Panc1 (cell line): ENCODE measurements at regions of chr3 and their contacts with region 1.

Region 1: DNA sequence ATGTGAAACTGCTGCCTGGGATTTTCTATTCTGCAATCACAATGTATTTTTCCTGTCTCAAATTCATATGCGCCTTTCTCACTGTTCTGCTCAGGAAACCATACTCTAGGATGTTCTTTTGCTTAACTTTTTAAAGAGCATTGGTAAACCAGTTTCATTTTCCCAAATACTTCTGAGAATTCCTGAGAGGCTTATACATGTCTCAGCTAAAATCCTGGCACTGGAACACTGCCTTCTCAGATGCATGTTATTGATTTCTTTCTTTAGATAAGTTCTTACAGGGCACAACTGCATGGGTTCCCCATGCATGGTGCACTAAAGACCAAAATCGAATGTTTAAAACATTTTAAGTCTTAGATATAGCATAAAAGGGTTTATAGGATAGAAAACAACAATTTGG is 178.3 kb upstream of the PLSCR5 start:
- DNase-seq: no peak
- ATAC-seq: no peak
- H3K4me3 ChIP-seq: no peak overlapping the region
- H3K27ac ChIP-seq: no peak overlapping the region
- H3K4me1 ChIP-seq: no peaks in the 10 kb centered on the region
- H3K27me3 ChIP-seq: no peaks in the 10 kb centered on the region
- CTCF ChIP-seq: no peak

Region 2: DNA sequence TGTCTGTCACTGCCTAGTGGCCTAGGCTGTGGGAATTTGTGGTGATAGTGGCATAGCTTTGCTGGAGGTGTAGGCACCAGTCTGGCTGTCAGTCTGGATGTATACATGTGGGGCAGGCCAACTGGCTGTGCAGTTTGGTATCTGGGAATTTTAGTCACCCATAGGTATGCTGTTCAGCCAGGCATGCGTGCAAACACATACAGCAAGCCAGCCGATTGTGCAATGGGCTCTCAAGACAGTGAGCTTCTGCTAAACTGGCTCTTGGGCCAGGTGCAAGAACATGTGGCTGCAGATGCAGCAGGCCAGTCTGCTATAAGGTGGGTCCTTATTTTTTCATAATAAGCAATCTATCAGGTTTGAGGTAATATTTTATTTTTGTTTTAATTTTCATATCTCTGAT is 91.2 kb before region 1 on chr3:
- CTCF ChIA-PET with region 1: no interaction called
- POLR2A ChIA-PET with region 1: no interaction called
- in situ Hi-C with region 1: no loop called
- intact Hi-C with region 1: no loop called
- DNase-seq: no peak
- ATAC-seq: no peak
- H3K4me3 ChIP-seq: no peak overlapping the region
- H3K27ac ChIP-seq: no peak overlapping the region
- H3K4me1 ChIP-seq: no peaks in the 10 kb centered on the region
- H3K27me3 ChIP-seq: no peaks in the 10 kb centered on the region
- CTCF ChIP-seq: no peak

Region 3: DNA sequence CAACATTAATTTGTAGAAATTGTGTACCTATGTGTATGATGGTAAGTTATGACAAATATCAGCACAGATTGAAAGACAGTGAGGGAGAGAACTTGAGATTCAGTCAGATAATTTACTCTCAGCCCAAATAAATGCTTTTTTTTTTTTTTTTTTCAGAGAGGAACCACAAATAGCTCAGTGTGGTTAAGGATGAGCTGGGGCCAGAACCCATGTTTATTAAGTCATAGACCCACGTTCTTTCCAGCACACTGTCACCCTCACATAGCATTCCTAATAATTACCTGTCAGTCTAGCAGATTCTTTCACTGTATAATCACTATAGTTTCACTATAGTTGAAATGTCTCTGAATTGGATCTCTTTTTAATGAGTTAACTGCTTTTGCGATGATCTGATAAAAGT is 871.8 kb after region 1 on chr3:
- CTCF ChIA-PET with region 1: no interaction called
- POLR2A ChIA-PET with region 1: interaction called, 11 read pairs
- in situ Hi-C with region 1: no loop called
- intact Hi-C with region 1: no loop called
- DNase-seq: no peak
- ATAC-seq: no peak
- H3K4me3 ChIP-seq: no peak overlapping the region
- H3K27ac ChIP-seq: no peak overlapping the region
- H3K4me1 ChIP-seq: no peaks in the 10 kb centered on the region
- H3K27me3 ChIP-seq: no peaks in the 10 kb centered on the region
- CTCF ChIP-seq: no peak